IMR-90 (cell line): ENCODE measurements at regions of chr12 and their contacts with region 1.

Region 1: GRCh38 chr12:30095511-30095910 is 311.8 kb upstream of the TMTC1 start:
- DNase-seq: no peak
- ATAC-seq: no peak
- H3K4me3 ChIP-seq: no peak overlapping the region
- H3K27ac ChIP-seq: no peak overlapping the region
- H3K4me1 ChIP-seq: no peaks in the 10 kb centered on the region
- H3K27me3 ChIP-seq: peaks cover 4% of the 10 kb centered on the region
- CTCF ChIP-seq: no peak
- POLR2A ChIP-seq: no peak
- RAD21 ChIP-seq: no peak

Region 2: GRCh38 chr12:29334937-29335336 is 760.6 kb before region 1 on chr12:
- CTCF ChIA-PET with region 1: no interaction called
- POLR2A ChIA-PET with region 1: no interaction called
- dilution Hi-C with region 1: no loop called
- in situ Hi-C with region 1: no loop called
- intact Hi-C with region 1: no loop called
- DNase-seq: peak; percentile 13
- ATAC-seq: peak; percentile 42
- H3K4me3 ChIP-seq: no peak overlapping the region
- H3K27ac ChIP-seq: no peak overlapping the region
- H3K4me1 ChIP-seq: no peaks in the 10 kb centered on the region
- H3K27me3 ChIP-seq: no peaks in the 10 kb centered on the region
- CTCF ChIP-seq: no peak
- POLR2A ChIP-seq: no peak
- RAD21 ChIP-seq: no peak

Region 3: GRCh38 chr12:30166006-30166795 is 70.7 kb after region 1 on chr12:
- CTCF ChIA-PET with region 1: no interaction called
- POLR2A ChIA-PET with region 1: no interaction called
- dilution Hi-C with region 1: no loop called
- in situ Hi-C with region 1: no loop called
- intact Hi-C with region 1: loop called (anchors 2 kb)
- DNase-seq: no peak
- ATAC-seq: no peak
- H3K4me3 ChIP-seq: no peak overlapping the region
- H3K27ac ChIP-seq: no peak overlapping the region
- H3K4me1 ChIP-seq: no peaks in the 10 kb centered on the region
- H3K27me3 ChIP-seq: peaks cover 17% of the 10 kb centered on the region
- CTCF ChIP-seq: no peak
- POLR2A ChIP-seq: no peak
- RAD21 ChIP-seq: no peak

Region 4: DNA sequence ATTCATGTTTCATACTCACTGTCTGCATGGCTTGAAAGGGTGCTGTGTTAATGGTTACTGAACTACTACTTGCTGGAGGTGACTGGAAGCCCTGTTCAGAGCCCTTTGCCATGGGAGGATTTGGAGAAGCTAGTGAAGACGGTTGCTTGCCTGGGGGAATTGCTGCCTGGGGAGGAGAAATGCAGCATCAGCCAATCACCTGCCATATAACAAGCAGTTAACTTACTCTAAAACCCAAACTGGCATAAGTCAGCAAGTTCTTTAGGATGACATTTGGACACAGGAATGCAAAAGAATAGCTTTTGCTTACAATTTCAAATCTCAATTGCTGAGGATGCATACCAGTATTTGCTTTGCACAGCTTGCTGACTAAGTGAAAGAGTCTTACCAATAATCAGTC is 623.5 kb after region 1 on chr12:
- CTCF ChIA-PET with region 1: no interaction called
- POLR2A ChIA-PET with region 1: no interaction called
- dilution Hi-C with region 1: no loop called
- in situ Hi-C with region 1: no loop called
- intact Hi-C with region 1: no loop called
- DNase-seq: peak; percentile 85
- ATAC-seq: peak; percentile 97
- H3K4me3 ChIP-seq: no peak overlapping the region
- H3K27ac ChIP-seq: no peak overlapping the region
- H3K4me1 ChIP-seq: peaks cover 3% of the 10 kb centered on the region
- H3K27me3 ChIP-seq: no peaks in the 10 kb centered on the region
- CTCF ChIP-seq: no peak
- POLR2A ChIP-seq: no peak
- RAD21 ChIP-seq: no peak